ENCODE measurements at regions of chr3 and their contacts with region 1.

Region 1: GRCh38 chr3:193592944-193593667 is at the start of gene OPA1:
- DNase-seq: peak; percentile 82
- ATAC-seq: peak; percentile 96
- H3K4me3 Mint-ChIP-seq: peak within 1 kb of the TSS; percentile 94
- H3K27ac Mint-ChIP-seq: peak within 1 kb of the TSS; percentile 89
- H3K4me1 Mint-ChIP-seq: peaks cover 52% of the 10 kb centered on the region
- H3K27me3 Mint-ChIP-seq: no peaks in the 10 kb centered on the region
- CTCF ChIP-seq: no peak
- total RNA-seq, gene OPA1: 76.1 and 80.6 TPM in 2 replicates

Region 2: DNA sequence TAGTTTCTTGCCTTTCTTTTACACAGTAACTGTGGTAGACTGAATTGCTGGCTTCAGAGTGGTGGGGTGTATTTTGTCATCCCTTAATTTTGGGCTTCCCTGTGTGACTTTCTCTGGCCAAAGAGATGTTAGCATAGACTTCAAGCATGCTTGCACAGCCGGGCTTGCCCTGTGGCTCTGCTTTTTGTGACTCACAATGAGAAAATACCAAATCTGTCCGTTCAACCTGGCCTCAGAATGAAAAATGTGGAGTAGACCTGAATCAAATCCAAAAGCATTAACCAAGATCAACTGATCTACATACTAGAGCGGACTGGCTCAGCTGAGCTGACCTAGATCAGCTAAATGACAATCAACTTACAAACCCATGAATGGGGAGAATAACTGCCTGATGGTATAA is 300.7 kb before region 1 on chr3:
- CTCF ChIA-PET with region 1: no interaction called
- POLR2A ChIA-PET with region 1: no interaction called
- intact Hi-C with region 1: no loop called
- DNase-seq: no peak
- ATAC-seq: no peak
- H3K4me3 Mint-ChIP-seq: no peak overlapping the region
- H3K27ac Mint-ChIP-seq: no peak overlapping the region
- H3K4me1 Mint-ChIP-seq: no peaks in the 10 kb centered on the region
- H3K27me3 Mint-ChIP-seq: no peaks in the 10 kb centered on the region
- CTCF ChIP-seq: no peak

Region 3: GRCh38 chr3:193605876-193606275 is 12.8 kb after region 1 on chr3:
- CTCF ChIA-PET with region 1: interaction called, 4 read pairs
- POLR2A ChIA-PET with region 1: no interaction called
- intact Hi-C with region 1: loop called (anchors 2 kb)
- DNase-seq: no peak
- ATAC-seq: peak; percentile 68
- H3K4me3 Mint-ChIP-seq: no peak overlapping the region
- H3K27ac Mint-ChIP-seq: no peak overlapping the region
- H3K4me1 Mint-ChIP-seq: peaks cover 31% of the 10 kb centered on the region
- H3K27me3 Mint-ChIP-seq: no peaks in the 10 kb centered on the region
- CTCF ChIP-seq: no peak

Region 4: DNA sequence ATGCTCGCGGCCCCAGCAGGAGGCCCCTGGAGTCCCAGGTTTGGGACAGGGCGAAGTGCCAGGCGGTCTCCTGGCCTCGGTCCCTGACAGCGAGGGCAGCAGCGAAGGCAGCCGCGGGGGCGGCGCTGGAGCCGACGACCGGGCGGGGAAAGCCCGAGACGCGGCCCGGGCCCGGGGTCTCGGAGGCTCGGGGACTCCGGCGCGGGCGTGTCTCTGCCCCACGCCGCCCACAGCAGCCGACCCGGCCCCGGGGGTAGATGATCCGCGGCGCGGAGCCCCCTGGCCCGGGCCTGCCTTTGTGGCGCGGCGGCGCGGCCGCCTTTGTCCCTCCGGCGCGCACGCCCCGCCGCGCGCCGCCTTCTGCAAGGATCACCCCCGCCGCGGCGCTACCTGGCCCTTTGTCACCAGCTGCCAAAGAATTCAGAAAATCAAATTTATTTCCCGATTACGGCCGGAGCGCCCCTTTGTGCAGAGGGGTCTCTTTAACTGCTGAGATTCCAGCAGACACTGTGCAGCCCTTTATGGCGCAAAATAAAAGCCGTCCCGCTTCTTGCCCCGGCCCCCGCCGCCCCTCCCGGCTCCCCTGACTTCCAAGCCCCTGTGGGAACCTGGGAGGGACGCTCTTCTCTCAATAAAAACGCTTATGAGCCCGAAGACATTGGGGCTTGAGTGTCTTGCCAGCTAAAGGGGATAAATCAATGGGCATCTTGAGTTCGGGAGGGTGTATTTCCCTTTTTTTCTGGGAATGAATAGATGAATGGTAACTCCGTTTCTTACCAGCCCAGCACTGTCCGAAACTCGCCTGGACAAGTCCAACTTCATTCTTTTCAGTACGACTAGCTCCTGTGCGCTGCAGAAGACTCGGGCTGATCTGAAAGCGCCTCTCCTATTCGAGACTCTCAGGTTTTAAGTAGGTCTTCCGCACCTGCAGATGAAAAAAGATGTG is 611.2 kb after region 1 on chr3:
- CTCF ChIA-PET with region 1: no interaction called
- POLR2A ChIA-PET with region 1: no interaction called
- intact Hi-C with region 1: no loop called
- DNase-seq: peak; percentile 30
- ATAC-seq: peak; percentile 61
- H3K4me3 Mint-ChIP-seq: peak overlapping the region; percentile 80
- H3K27ac Mint-ChIP-seq: peak overlapping the region; percentile 54
- H3K4me1 Mint-ChIP-seq: peaks cover 32% of the 10 kb centered on the region
- H3K27me3 Mint-ChIP-seq: peaks cover 32% of the 10 kb centered on the region
- CTCF ChIP-seq: no peak